ENCODE measurements at regions of chr10 and their contacts with region 1.

Region 1: GRCh38 chr10:24465891-24466818 is 257.2 kb downstream of the KIAA1217 start:
- DNase-seq: peak; percentile 31
- H3K4me3 Mint-ChIP-seq: peak overlapping the region; percentile 19
- H3K27ac Mint-ChIP-seq: peak overlapping the region; percentile 57
- H3K4me1 Mint-ChIP-seq: peaks cover 48% of the 10 kb centered on the region
- H3K27me3 Mint-ChIP-seq: peaks cover 21% of the 10 kb centered on the region

Region 2: DNA sequence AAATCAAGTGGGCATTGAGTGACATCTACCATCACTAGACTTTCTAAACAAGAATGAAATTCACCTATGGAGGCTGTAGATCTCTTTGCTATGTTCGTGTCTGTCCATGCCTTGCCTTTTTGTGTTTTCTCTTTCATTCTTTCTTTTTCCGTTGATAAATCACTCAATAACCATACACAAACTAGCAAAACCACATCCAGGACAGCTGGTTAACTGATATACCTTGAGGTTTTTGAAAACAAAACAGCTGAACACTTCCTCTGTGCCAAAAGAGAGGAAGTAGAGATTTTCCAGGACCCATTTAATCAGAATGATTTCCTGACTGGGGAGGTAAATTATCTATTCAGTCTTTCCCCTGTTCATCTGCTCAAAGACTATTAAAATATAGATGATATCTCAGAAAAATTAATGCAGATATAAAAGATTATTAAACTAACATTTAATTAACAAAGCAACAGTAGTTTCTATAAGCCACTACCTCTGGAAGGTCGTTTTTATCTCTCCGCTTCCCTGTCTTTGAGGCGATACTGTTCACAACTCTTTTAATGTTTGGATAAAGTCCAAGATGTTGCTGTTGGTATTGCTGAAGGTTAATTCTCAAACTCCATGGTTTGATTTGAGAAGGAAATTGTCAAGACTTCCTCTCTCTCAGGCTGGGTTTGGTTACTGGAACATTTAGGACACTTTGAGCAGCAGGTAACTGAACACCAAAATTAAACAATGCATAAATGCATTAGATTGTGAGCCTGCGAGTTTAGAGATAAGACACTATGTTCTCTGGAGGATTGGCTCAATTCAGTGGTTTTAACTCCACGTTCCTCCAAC is 1097.1 kb before region 1 on chr10:
- intact Hi-C with region 1: loop called (anchors 10 kb)
- DNase-seq: peak; percentile 16
- H3K4me3 Mint-ChIP-seq: peak overlapping the region; percentile 53
- H3K27ac Mint-ChIP-seq: peak overlapping the region; percentile 60
- H3K4me1 Mint-ChIP-seq: peaks cover 55% of the 10 kb centered on the region
- H3K27me3 Mint-ChIP-seq: no peaks in the 10 kb centered on the region

Region 3: GRCh38 chr10:24209946-24210491 is 256.1 kb before region 1 on chr10:
- intact Hi-C with region 1: loop called (anchors 5 kb)
- DNase-seq: no peak
- H3K4me3 Mint-ChIP-seq: peak overlapping the region; percentile 55
- H3K27ac Mint-ChIP-seq: peak overlapping the region; percentile 69
- H3K4me1 Mint-ChIP-seq: peaks cover 24% of the 10 kb centered on the region
- H3K27me3 Mint-ChIP-seq: peaks cover 42% of the 10 kb centered on the region

Region 4: DNA sequence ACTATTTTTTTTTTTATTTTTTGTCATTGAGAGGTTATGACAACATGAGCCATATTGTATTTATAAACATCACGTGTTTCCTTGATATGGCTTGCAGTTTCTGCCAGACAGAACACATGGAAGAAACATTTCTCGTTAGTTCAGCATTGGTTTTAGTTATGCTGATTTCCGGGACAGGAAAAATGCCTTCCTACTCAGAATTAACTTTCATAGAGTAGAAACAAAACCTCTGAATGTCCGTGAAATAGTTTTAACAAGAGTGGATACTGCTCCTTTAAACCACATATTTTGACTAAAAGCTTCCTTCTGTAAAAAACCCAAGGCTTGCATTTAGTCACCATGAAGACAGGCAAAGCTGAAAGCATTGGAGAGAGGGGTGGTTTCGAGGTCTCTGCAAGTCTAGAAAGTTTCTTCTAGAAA is 16.8 kb before region 1 on chr10:
- intact Hi-C with region 1: loop called (anchors 1 kb)
- DNase-seq: no peak
- H3K4me3 Mint-ChIP-seq: no peak overlapping the region
- H3K27ac Mint-ChIP-seq: no peak overlapping the region
- H3K4me1 Mint-ChIP-seq: peaks cover 18% of the 10 kb centered on the region
- H3K27me3 Mint-ChIP-seq: peaks cover 25% of the 10 kb centered on the region

Region 5: GRCh38 chr10:24579906-24580305 is 113.8 kb after region 1 on chr10:
- intact Hi-C with region 1: no loop called
- DNase-seq: no peak
- H3K4me3 Mint-ChIP-seq: no peak overlapping the region
- H3K27ac Mint-ChIP-seq: no peak overlapping the region
- H3K4me1 Mint-ChIP-seq: peaks cover 19% of the 10 kb centered on the region
- H3K27me3 Mint-ChIP-seq: peaks cover 3% of the 10 kb centered on the region

Region 6: DNA sequence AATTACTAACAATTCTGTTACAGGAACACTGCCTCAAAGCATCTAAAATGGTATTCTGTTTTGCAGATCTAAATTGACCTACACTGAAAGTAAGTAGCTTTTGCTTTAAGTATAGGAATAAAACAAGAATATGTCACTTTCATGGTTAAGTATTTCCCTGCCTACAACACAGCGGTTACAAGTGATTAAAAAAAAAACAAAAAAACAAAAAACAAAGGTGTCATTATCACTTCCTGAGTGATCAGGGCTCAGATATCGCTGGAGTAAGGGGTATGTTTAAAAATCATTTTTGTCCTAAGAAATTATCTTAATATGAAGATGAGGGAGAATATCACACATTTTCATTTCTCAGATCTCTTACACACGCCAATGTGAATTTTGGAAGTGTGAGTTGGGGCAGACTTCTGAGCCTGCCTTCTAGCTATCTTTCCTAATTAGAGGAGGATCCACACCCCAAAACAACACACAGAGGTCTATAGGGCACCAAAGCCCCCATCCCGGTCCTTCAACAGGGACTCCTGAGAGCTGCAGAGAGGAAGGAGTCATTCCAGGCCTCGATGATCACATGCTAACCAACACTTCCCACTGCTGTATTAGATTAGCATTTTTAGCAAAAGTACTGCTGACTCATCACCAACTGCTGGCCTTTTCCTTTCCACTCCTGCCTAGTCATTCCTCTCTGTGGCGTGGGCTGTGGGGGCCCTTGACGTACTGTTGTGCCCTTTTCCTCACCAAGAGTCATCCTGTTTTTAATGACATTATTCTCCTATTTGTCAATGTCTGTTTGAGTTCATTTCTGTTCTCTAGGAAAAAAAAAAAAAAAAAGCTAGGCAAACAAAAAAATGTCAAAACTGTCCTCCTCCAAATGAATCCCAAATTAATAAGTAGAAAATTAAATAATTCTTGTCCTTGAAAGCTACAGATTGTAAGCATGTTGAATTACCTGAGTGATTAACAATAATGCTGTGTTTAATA is 455.0 kb after region 1 on chr10:
- intact Hi-C with region 1: loop called (anchors 1 kb)
- DNase-seq: peak; percentile 25
- H3K4me3 Mint-ChIP-seq: no peak overlapping the region
- H3K27ac Mint-ChIP-seq: peak overlapping the region; percentile 85
- H3K4me1 Mint-ChIP-seq: peaks cover 25% of the 10 kb centered on the region
- H3K27me3 Mint-ChIP-seq: no peaks in the 10 kb centered on the region

Region 7: GRCh38 chr10:25191162-25191895 is 725.2 kb after region 1 on chr10:
- intact Hi-C with region 1: no loop called
- DNase-seq: no peak
- H3K4me3 Mint-ChIP-seq: no peak overlapping the region
- H3K27ac Mint-ChIP-seq: no peak overlapping the region
- H3K4me1 Mint-ChIP-seq: no peaks in the 10 kb centered on the region
- H3K27me3 Mint-ChIP-seq: no peaks in the 10 kb centered on the region